Natural killer cell (primary cell): ENCODE measurements at regions of chr18 and their contacts with region 1.

Region 1: DNA sequence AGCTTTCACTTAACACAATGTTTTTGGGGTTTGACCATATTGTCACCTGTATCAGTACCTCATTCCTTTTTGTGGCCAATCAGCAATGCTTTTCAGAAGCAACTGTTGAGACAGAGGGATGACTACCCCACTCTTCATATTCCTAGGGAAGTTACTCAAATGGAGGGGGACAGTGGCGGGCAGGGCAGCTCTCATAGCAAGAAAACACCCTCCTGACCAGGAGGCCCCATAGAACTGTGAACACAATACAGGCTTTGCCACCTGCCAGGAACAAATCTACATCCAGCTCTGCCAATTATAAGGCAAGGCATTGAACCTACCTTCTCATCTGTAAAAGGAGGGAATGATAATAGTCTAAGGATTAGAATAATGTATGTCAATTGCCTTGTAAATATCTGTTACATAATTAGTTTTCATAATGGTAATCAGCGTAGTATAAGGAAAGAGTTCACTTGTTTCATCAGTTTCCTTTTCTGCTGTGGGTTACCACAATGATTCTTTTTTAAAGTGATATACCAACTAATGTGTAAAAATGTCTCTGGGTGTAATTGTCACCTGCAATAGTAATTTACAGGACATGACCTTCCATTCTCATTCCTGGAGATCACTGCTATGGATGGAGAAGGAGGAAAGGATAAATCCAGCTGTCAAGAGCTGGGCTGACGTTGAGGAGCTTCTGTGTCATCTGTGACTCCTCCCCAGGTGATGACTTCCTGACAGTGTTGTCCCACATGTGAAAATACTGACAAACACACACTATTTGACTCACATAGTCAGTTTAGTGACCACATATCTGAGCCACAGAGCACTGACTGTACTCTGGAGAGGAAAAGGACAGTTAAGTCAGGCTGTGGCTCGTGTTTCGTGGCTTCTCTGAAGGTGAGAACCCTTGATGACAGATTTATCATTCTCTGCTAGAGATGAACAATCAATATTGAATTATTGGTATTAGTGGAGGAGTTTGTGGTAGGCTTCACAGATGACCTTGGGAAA is 13.5 kb downstream of the ALPK2 start:
- DNase-seq: peak; percentile 38 to 76
- ATAC-seq: peak; percentile 91 to 96 (median 96)
- H3K4me3 ChIP-seq: no peak overlapping the region
- H3K4me3 Mint-ChIP-seq: peak overlapping the region; percentile 79
- H3K27ac ChIP-seq: peak overlapping the region; percentile 82
- H3K27ac Mint-ChIP-seq: peak overlapping the region; percentile 90 to 95
- H3K4me1 ChIP-seq: peaks cover 25% of the 10 kb centered on the region
- H3K4me1 Mint-ChIP-seq: peaks cover 16 to 27% of the 10 kb centered on the region in 2 donors
- H3K27me3 ChIP-seq: no peaks in the 10 kb centered on the region
- H3K27me3 Mint-ChIP-seq: no peaks in the 10 kb centered on the region
- CTCF ChIP-seq: no peak

Region 2: DNA sequence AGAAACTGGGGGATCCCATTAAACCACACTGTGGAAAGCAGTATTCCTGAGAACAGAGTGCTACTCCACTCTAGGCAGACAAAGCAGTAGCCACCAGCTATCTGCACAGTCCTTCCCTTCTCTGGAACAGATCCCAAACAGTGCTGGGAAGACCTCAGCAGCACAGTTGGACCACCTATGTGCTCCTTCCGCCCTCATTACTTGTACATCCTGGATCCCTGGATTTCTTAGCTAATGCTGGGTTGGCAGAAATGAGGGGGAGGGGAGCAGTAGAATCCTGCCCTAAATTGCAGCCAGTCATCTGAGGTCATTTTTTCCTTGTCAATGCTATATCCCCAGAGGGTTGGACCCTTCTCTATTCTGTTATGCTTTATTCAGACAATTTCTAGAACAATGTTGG is 42.1 kb after region 1 on chr18:
- intact Hi-C with region 1: loop called (anchors 5 kb)
- DNase-seq: no peak
- ATAC-seq: no peak
- H3K4me3 ChIP-seq: no peak overlapping the region
- H3K4me3 Mint-ChIP-seq: peak overlapping the region; percentile 82
- H3K27ac ChIP-seq: peak overlapping the region; percentile 74
- H3K27ac Mint-ChIP-seq: peak overlapping the region; percentile 86 to 99
- H3K4me1 ChIP-seq: peaks cover 21% of the 10 kb centered on the region
- H3K4me1 Mint-ChIP-seq: peaks cover 28 to 42% of the 10 kb centered on the region in 2 donors
- H3K27me3 ChIP-seq: no peaks in the 10 kb centered on the region
- H3K27me3 Mint-ChIP-seq: no peaks in the 10 kb centered on the region
- CTCF ChIP-seq: no peak